B cell (primary cell): ENCODE measurements at regions of chr1 and their contacts with region 1.

Region 1: DNA sequence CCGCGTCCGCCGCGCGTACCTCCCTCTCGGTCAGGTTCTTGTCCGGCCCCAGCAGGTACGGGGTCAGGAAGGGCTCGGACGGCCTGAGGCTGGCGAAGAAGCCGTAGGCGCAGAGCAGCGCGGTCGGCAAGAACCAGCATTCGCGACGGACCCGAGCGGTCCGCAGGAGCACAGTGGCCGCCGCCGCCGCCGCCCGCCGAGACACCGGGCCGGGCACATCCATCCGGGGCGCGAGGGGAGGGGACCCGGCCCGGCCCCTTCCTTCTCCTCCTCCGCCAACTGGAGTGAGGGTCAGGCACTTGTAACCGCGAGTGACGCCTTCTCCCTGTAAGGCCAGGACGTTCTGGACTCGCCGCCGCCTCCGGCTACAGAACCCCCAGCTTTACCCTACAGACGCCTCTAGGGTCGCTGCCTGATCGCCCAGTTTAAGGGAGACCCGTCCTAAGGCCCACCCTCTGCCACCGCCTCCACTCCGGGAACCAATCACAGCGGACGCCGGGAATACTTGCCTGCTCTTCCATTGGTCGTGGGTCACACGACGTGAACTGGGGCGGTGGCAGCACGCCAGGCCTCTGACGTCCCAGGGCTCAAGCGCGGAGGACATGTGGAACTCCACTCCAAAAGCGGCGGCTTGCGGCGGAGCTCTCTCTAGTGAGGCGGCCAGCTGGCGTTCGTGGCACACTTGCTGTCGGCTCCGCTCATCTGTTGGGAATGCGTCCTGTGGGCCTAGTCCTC is at the start of gene SLC19A2:
- DNase-seq: peak; percentile 96
- ATAC-seq: peak; percentile 98
- H3K4me3 ChIP-seq: peak within 1 kb of the TSS; percentile 68 to 82 (median 74)
- H3K4me3 Mint-ChIP-seq: peak within 1 kb of the TSS; percentile 94
- H3K27ac ChIP-seq: peak within 1 kb of the TSS; percentile 62 to 82
- H3K27ac Mint-ChIP-seq: peak within 1 kb of the TSS; percentile 93
- H3K4me1 ChIP-seq: peaks cover 16 to 18% of the 10 kb centered on the region in 2 donors
- H3K4me1 Mint-ChIP-seq: peaks cover 28% of the 10 kb centered on the region
- H3K27me3 ChIP-seq: peaks cover 0 to 3% (median 0%) of the 10 kb centered on the region in 4 experiments
- H3K27me3 Mint-ChIP-seq: peaks cover 4% of the 10 kb centered on the region
- CTCF ChIP-seq: peak; percentile 44
- total RNA-seq, gene SLC19A2: 3.9 TPM in 2 replicates

Region 2: GRCh38 chr1:168178638-168179437 is 1306.9 kb before region 1 on chr1 and contains the start of gene TIPRL:
- CTCF ChIA-PET with region 1: no interaction called
- POLR2A ChIA-PET with region 1: no interaction called
- intact Hi-C with region 1: loop called (anchors 5 kb)
- DNase-seq: peak; percentile 96
- ATAC-seq: peak; percentile 92
- H3K4me3 ChIP-seq: peak within 1 kb of the TSS; percentile 87 to 97 (median 91)
- H3K4me3 Mint-ChIP-seq: peak within 1 kb of the TSS; percentile 47
- H3K27ac ChIP-seq: peak within 1 kb of the TSS; percentile 83 to 98
- H3K27ac Mint-ChIP-seq: peak within 1 kb of the TSS; percentile 15
- H3K4me1 ChIP-seq: peaks cover 17 to 18% of the 10 kb centered on the region in 2 donors
- H3K4me1 Mint-ChIP-seq: peaks cover 1% of the 10 kb centered on the region
- H3K27me3 ChIP-seq: peaks cover 0 to 5% (median 0%) of the 10 kb centered on the region in 4 experiments
- H3K27me3 Mint-ChIP-seq: peaks cover 4% of the 10 kb centered on the region
- CTCF ChIP-seq: peak; percentile 73
- total RNA-seq, gene TIPRL: 22.7 and 24.9 TPM in 2 replicates

Region 3: DNA sequence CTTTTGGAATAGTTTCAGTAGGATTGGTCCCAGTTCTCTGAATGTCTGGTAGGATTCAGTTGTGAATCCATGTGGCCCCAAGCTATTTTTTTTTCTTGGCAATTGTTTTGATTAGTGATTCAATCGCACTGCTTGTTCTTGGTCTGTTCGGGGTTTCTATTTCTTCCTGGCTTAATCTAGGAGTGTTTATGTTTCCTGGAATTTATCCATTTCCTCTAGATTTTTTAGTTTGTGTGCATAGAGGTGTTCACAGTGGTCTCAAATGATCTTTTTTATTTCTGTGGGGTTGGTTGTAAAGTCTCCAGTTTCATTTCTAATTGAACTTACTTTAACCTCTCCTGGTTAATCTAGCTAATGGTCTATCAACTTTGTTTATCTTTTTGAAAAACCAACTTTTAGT is 235.7 kb before region 1 on chr1:
- CTCF ChIA-PET with region 1: no interaction called
- POLR2A ChIA-PET with region 1: no interaction called
- intact Hi-C with region 1: no loop called
- DNase-seq: no peak
- ATAC-seq: no peak
- H3K4me3 ChIP-seq: no peak overlapping the region
- H3K4me3 Mint-ChIP-seq: no peak overlapping the region
- H3K27ac ChIP-seq: no peak overlapping the region
- H3K27ac Mint-ChIP-seq: no peak overlapping the region
- H3K4me1 ChIP-seq: no peaks in the 10 kb centered on the region
- H3K4me1 Mint-ChIP-seq: no peaks in the 10 kb centered on the region
- H3K27me3 ChIP-seq: no peaks in the 10 kb centered on the region
- H3K27me3 Mint-ChIP-seq: no peaks in the 10 kb centered on the region
- CTCF ChIP-seq: no peak

Region 4: DNA sequence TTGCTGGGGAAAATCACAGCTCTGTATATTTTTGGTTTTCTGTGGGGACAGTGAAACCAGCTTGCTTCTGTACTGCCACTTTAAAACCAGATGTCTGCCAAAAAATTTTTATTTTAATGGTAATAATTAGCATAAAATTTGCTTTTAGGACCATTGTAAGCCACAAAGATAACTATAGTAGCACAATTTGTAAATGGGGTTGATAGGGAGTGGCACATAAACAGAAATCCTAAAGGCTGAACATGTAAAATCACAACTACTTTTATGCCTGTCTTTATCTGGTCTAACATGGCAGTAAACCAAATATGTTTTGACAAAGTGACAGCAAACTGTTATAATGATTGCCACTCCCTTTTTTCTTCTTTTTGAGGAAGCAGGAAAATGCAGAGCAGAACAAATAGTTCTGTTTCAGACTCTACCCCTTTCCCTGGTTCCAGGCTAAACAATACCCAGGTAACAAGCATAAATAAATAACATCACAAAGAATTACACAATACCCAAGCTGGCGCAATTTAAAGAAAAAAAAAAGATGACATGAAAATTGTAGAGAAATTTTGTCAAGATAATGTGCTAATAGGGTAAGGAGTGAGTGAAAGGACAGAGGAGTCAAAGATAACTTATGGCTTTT is 34.4 kb before region 1 on chr1:
- CTCF ChIA-PET with region 1: no interaction called
- POLR2A ChIA-PET with region 1: no interaction called
- intact Hi-C with region 1: no loop called
- DNase-seq: no peak
- ATAC-seq: no peak
- H3K4me3 ChIP-seq: no peak overlapping the region
- H3K4me3 Mint-ChIP-seq: no peak overlapping the region
- H3K27ac ChIP-seq: no peak overlapping the region
- H3K27ac Mint-ChIP-seq: no peak overlapping the region
- H3K4me1 ChIP-seq: no peaks in the 10 kb centered on the region
- H3K4me1 Mint-ChIP-seq: no peaks in the 10 kb centered on the region
- H3K27me3 ChIP-seq: no peaks in the 10 kb centered on the region
- H3K27me3 Mint-ChIP-seq: peaks cover 42% of the 10 kb centered on the region
- CTCF ChIP-seq: no peak

Region 5: DNA sequence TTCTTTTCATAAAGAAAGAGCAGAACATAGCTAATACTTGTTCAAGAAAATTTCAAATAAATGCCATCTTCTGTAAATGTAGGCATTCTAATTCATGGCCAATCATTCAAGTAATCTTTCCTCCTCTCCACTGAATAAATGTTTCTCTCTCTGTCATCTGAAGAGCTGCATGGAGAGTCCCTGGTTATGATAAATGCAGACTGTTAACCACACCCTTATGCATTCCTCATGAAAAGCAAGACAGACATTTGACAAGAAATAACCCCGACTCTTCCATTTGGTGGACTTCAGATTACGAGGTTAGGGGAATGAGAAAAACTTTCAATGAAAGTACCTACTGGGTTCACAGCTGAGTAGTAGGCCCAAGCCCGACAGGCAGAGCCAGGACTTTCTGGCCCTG is 44.7 kb after region 1 on chr1:
- CTCF ChIA-PET with region 1: no interaction called
- POLR2A ChIA-PET with region 1: no interaction called
- intact Hi-C with region 1: no loop called
- DNase-seq: no peak
- ATAC-seq: no peak
- H3K4me3 ChIP-seq: no peak overlapping the region
- H3K4me3 Mint-ChIP-seq: no peak overlapping the region
- H3K27ac ChIP-seq: no peak overlapping the region
- H3K27ac Mint-ChIP-seq: no peak overlapping the region
- H3K4me1 ChIP-seq: no peaks in the 10 kb centered on the region
- H3K4me1 Mint-ChIP-seq: peaks cover 13% of the 10 kb centered on the region
- H3K27me3 ChIP-seq: peaks cover 0 to 4% (median 0%) of the 10 kb centered on the region in 4 experiments
- H3K27me3 Mint-ChIP-seq: peaks cover 20% of the 10 kb centered on the region
- CTCF ChIP-seq: no peak

Region 6: GRCh38 chr1:169546087-169546995 is 60.6 kb after region 1 on chr1:
- CTCF ChIA-PET with region 1: interaction called, 12 read pairs
- POLR2A ChIA-PET with region 1: no interaction called
- intact Hi-C with region 1: loop called (anchors 1 kb)
- DNase-seq: peak; percentile 81
- ATAC-seq: peak; percentile 82
- H3K4me3 ChIP-seq: no peak overlapping the region
- H3K4me3 Mint-ChIP-seq: no peak overlapping the region
- H3K27ac ChIP-seq: no peak overlapping the region
- H3K27ac Mint-ChIP-seq: no peak overlapping the region
- H3K4me1 ChIP-seq: no peaks in the 10 kb centered on the region
- H3K4me1 Mint-ChIP-seq: no peaks in the 10 kb centered on the region
- H3K27me3 ChIP-seq: no peaks in the 10 kb centered on the region
- H3K27me3 Mint-ChIP-seq: peaks cover 13% of the 10 kb centered on the region
- CTCF ChIP-seq: peak; percentile 78

Region 7: DNA sequence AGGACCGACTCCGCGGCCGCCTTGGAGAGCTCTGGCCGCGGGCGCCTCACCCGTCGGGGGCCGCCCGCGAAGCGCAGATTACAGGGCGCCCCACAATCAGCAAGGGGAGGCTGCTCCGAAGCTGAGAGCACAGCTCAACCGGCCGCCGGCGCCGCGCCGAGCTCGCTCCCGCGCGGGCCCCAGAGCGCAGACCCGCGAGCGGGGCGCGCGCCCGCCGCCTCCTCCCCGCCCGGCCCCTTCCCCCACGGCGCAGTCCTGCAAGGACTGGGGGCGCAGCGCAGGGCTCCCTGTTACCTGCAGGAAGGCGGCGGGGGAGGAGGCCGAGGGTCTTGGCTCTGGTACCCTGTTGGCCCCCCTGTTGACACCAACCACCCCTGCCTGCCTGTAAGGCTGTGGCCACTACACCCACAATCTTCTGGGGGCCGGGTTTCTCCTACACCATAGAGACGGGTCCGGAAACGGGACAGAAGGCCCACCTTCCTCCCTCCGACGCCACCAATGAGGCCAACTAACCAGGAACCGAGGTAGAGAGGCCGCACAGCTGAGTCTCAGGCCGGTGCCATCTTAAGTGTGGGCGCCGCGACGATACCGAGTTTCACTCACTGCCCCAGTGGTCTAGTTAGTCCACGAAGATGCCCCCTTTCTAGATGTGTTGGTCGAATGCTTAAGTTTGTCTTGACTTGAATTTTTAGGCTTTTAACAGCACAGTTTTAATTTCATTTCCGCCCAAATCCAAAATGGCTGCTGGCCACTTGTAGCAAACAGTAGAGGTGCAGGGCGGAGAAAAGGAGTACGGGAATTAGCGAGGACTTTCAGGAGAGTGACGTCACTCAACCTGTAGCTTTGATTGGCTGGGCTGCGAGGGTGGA is 408.0 kb after region 1 on chr1 and contains the start of gene SCYL3:
- CTCF ChIA-PET with region 1: no interaction called
- POLR2A ChIA-PET with region 1: no interaction called
- intact Hi-C with region 1: loop called (anchors 1 kb)
- DNase-seq: peak; percentile 99
- ATAC-seq: peak; percentile 88
- H3K4me3 ChIP-seq: peak within 1 kb of the TSS; percentile 81 to 96 (median 85)
- H3K4me3 Mint-ChIP-seq: peak within 1 kb of the TSS; percentile 98
- H3K27ac ChIP-seq: peak within 1 kb of the TSS; percentile 97
- H3K27ac Mint-ChIP-seq: peak within 1 kb of the TSS; percentile 100
- H3K4me1 ChIP-seq: peaks cover 25 to 32% of the 10 kb centered on the region in 2 donors
- H3K4me1 Mint-ChIP-seq: peaks cover 44% of the 10 kb centered on the region
- H3K27me3 ChIP-seq: peaks cover 0 to 3% (median under 1%) of the 10 kb centered on the region in 4 experiments
- H3K27me3 Mint-ChIP-seq: peaks cover 15% of the 10 kb centered on the region
- CTCF ChIP-seq: no peak
- total RNA-seq, gene SCYL3: 17.6 and 18.4 TPM in 2 replicates

Region 8: GRCh38 chr1:170531758-170532657 is 1046.3 kb after region 1 on chr1 and contains the start of gene GORAB:
- CTCF ChIA-PET with region 1: no interaction called
- POLR2A ChIA-PET with region 1: interaction called, 7 read pairs
- intact Hi-C with region 1: loop called (anchors 5 kb)
- DNase-seq: peak; percentile 91
- ATAC-seq: peak; percentile 97
- H3K4me3 ChIP-seq: peak within 1 kb of the TSS; percentile 72 to 95 (median 89)
- H3K4me3 Mint-ChIP-seq: no peak within 1 kb of the TSS
- H3K27ac ChIP-seq: peak within 1 kb of the TSS; percentile 82 to 92
- H3K27ac Mint-ChIP-seq: no peak within 1 kb of the TSS
- H3K4me1 ChIP-seq: peaks cover 12 to 17% of the 10 kb centered on the region in 2 donors
- H3K4me1 Mint-ChIP-seq: peaks cover 13% of the 10 kb centered on the region
- H3K27me3 ChIP-seq: no peaks in the 10 kb centered on the region
- H3K27me3 Mint-ChIP-seq: no peaks in the 10 kb centered on the region
- CTCF ChIP-seq: no peak
- total RNA-seq, gene GORAB: 24.2 and 32.5 TPM in 2 replicates